K562 (cell line): ENCODE measurements at regions of chr1 and their contacts with region 1.

Region 1: DNA sequence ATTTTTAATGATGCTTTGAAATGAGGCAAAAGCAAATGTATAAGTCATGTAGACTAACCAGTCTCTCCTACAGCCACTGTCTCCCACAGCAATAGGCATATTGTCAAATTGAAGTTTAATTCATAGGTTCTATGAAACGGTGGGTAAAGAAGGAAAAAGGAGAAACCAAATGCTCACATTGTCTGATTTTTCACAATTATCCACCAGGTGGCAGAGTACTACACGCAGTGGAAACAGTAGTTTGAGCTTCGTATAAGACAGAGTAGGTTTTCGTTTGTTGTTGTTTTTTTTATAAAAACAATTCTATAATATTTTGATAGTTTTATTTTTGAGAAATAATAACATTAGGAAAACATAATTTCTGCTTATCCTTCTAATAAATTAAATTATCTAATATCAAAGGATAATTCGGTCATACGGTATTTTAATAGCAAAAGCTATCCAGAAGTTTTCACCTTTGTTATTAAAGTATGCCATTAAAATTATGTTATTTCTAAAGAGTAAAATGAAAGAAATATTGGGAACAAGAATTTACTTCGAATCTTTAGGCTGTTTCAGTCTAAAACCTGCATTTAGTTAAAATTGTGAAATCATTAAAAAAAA is 39.1 kb downstream of the TYW3 start:
- DNase-seq: peak; percentile 25 to 62 (median 30)
- ATAC-seq: peak; percentile 82
- H3K4me3 ChIP-seq: no peak overlapping the region
- H3K27ac ChIP-seq: no peak overlapping the region
- H3K4me1 ChIP-seq: no peaks in the 10 kb centered on the region; a peak in 1 of 5 replicates
- H3K27me3 ChIP-seq: no peaks in the 10 kb centered on the region
- CTCF ChIP-seq: peak; percentile 58 to 71 (median 59); a peak in 5 of 6 replicates
- EP300 ChIP-seq: no peak
- POLR2A ChIP-seq: no peak
- RAD21 ChIP-seq: peak; percentile 84

Region 2: GRCh38 chr1:75134647-75135572 is 362.9 kb after region 1 on chr1:
- CTCF ChIA-PET with region 1: no interaction called
- POLR2A ChIA-PET with region 1: no interaction called
- in situ Hi-C with region 1: no loop called
- intact Hi-C with region 1: loop called (anchors 5 kb)
- DNase-seq: no peak
- ATAC-seq: no peak; the same call in 2 of the 3 replicates
- H3K4me3 ChIP-seq: no peak overlapping the region
- H3K27ac ChIP-seq: no peak overlapping the region
- H3K4me1 ChIP-seq: peaks cover 0 to 10% of the 10 kb centered on the region in 2 experiments; a peak in 1 of 5 replicates
- H3K27me3 ChIP-seq: peaks cover 65 to 66% of the 10 kb centered on the region in 2 experiments
- CTCF ChIP-seq: no peak
- EP300 ChIP-seq: no peak
- POLR2A ChIP-seq: no peak
- RAD21 ChIP-seq: no peak

Region 3: GRCh38 chr1:75203415-75204277 is 431.6 kb after region 1 on chr1:
- CTCF ChIA-PET with region 1: interaction called, 53 read pairs
- POLR2A ChIA-PET with region 1: no interaction called
- in situ Hi-C with region 1: loop called (anchors 10 kb)
- intact Hi-C with region 1: loop called (anchors 1 kb)
- DNase-seq: peak; percentile 35 to 44 (median 42)
- ATAC-seq: peak; percentile 92
- H3K4me3 ChIP-seq: no peak overlapping the region
- H3K27ac ChIP-seq: no peak overlapping the region
- H3K4me1 ChIP-seq: no peaks in the 10 kb centered on the region
- H3K27me3 ChIP-seq: no peaks in the 10 kb centered on the region
- CTCF ChIP-seq: peak; percentile 75 to 98 (median 93); a peak in 5 of 6 replicates
- EP300 ChIP-seq: no peak
- POLR2A ChIP-seq: no peak
- RAD21 ChIP-seq: peak; percentile 64 to 85